ENCODE measurements at regions of chr16 and their contacts with region 1.

Region 1: GRCh38 chr16:29848420-29849297 is 14.4 kb downstream of the CDIPT start:
- DNase-seq: peak; percentile 66 to 84 (median 74)
- H3K4me3 ChIP-seq: no peak overlapping the region
- H3K4me3 Mint-ChIP-seq: no peak overlapping the region
- H3K27ac ChIP-seq: no peak overlapping the region
- H3K27ac Mint-ChIP-seq: peak overlapping the region; percentile 45 to 68 (median 56)
- H3K4me1 ChIP-seq: no peaks in the 10 kb centered on the region
- H3K4me1 Mint-ChIP-seq: peaks cover 3 to 8% (median 5%) of the 10 kb centered on the region in 3 donors
- H3K27me3 ChIP-seq: no peaks in the 10 kb centered on the region
- H3K27me3 Mint-ChIP-seq: no peaks in the 10 kb centered on the region

Region 2: GRCh38 chr16:29694384-29695195 is 154.1 kb before region 1 on chr16:
- CTCF ChIA-PET with region 1: interaction called, 83 read pairs
- POLR2A ChIA-PET with region 1: no interaction called
- DNase-seq: no peak
- H3K4me3 ChIP-seq: no peak overlapping the region
- H3K4me3 Mint-ChIP-seq: no peak overlapping the region
- H3K27ac ChIP-seq: no peak overlapping the region
- H3K27ac Mint-ChIP-seq: no peak overlapping the region
- H3K4me1 ChIP-seq: peaks cover 5% of the 10 kb centered on the region
- H3K4me1 Mint-ChIP-seq: peaks cover 6 to 11% (median 10%) of the 10 kb centered on the region in 3 donors
- H3K27me3 ChIP-seq: no peaks in the 10 kb centered on the region
- H3K27me3 Mint-ChIP-seq: peaks cover 0 to 2% of the 10 kb centered on the region in 2 donors

Region 3: DNA sequence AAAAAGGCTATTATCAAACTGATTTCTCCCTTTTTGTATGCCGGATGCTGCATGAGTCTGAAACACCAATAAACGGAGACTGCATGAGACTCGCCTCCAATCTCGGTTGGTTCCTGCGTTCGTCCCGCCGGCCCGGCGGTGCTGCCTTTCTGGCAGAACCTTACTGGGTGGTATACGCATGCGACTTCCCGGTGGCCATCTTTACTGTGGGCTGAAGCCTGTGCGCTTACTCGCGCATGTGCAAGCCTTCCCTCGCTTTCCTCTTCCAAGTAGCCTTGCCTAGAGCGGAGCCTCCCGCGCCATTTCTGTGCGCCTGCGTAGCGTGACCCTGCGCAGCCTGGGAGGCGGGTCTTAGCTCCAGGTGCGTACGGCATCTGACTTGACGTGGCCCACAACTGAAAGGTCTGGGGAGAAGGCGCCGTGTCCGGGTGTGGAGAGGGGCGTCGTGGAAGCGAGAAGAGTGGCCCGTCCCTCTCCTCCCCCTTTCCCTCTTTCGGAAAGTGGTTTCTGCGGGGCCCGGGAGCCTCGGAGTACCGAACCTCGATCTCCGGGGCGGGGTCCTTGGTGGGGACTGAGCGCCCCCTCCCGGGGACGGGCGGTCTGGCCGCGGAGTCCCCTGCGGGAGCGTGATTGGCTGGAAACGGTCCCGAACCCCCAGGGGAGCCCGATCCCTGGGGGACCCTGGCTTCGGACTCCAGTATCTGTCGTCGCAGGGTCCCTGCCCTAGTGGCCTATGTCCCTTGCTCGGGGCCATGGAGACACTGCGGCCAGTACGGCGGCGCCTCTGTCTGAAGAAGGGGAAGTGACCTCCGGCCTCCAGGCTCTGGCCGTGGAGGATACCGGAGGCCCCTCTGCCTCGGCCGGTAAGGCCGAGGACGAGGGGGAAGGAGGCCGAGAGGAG is 32.6 kb before region 1 on chr16 and contains the start of gene PAGR1:
- CTCF ChIA-PET with region 1: interaction called, 88 read pairs
- POLR2A ChIA-PET with region 1: interaction called, 6 read pairs
- DNase-seq: peak; percentile 95 to 99 (median 99)
- H3K4me3 ChIP-seq: peak within 1 kb of the TSS; percentile 94
- H3K4me3 Mint-ChIP-seq: peak within 1 kb of the TSS; percentile 89 to 99 (median 93)
- H3K27ac ChIP-seq: peak within 1 kb of the TSS; percentile 89
- H3K27ac Mint-ChIP-seq: peak within 1 kb of the TSS; percentile 93 to 99 (median 98)
- H3K4me1 ChIP-seq: peaks cover 54% of the 10 kb centered on the region
- H3K4me1 Mint-ChIP-seq: peaks cover 53 to 79% (median 62%) of the 10 kb centered on the region in 3 donors
- H3K27me3 ChIP-seq: no peaks in the 10 kb centered on the region
- H3K27me3 Mint-ChIP-seq: peaks cover 0 to 4% of the 10 kb centered on the region in 2 donors
- total RNA-seq, gene PAGR1: 41.9 to 44.3 TPM

Region 4: DNA sequence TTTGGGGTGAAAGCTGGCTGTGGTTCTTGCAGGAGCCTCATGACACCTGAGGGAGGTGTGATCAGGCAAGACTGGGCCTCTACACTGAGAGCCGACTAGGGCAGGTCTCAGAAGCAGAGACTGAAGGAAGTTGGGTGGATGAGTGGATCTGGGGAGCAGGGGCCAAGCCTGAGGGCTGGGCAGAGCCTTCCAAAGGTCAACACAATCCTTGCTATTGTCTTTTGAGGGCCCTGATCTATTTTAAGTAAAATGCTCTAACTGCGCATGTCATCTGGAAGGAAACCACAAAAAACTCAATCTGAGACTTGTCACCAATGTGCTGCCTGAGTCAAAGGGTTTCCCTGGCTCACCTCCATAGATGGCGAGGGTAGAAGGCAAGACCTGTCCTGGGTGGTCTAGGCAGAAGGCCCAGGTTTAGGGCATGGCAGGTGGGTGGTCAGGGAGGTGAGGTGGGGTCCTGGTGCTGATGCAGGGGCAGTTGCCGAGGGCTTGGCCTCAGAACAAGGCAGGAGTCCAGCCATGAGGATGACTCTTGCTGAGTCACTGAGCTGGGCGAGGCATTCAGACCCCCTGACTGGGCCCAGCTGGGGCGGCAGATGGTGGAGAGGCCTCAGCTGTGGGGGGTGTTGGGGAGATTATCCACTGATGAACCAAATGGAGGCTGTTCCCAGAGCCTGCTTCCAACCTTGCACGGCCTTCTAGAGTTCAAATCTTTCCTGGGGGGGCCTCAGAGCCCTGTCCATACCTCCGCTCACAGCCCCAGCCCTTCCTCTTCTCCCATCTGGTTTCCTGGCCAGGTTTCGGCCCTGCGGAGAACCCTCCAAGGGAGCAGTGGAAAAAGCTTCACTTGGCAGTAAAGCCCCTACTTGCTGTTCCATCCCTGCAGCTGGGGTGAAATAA is 23.3 kb before region 1 on chr16:
- CTCF ChIA-PET with region 1: interaction called, 88 read pairs
- POLR2A ChIA-PET with region 1: interaction called, 3 read pairs
- DNase-seq: peak in 1 of 5 donors; percentile 39
- H3K4me3 ChIP-seq: peak overlapping the region; percentile 50
- H3K4me3 Mint-ChIP-seq: peak overlapping the region; percentile 46 to 79 (median 71)
- H3K27ac ChIP-seq: no peak overlapping the region
- H3K27ac Mint-ChIP-seq: peak overlapping the region; percentile 61 to 93 (median 88)
- H3K4me1 ChIP-seq: peaks cover 94% of the 10 kb centered on the region
- H3K4me1 Mint-ChIP-seq: peaks cover 51 to 78% (median 55%) of the 10 kb centered on the region in 3 donors
- H3K27me3 ChIP-seq: no peaks in the 10 kb centered on the region
- H3K27me3 Mint-ChIP-seq: no peaks in the 10 kb centered on the region

Region 5: GRCh38 chr16:29831490-29831889 is 17.2 kb before region 1 on chr16:
- CTCF ChIA-PET with region 1: interaction called, 22 read pairs
- POLR2A ChIA-PET with region 1: interaction called, 8 read pairs
- DNase-seq: no peak
- H3K4me3 ChIP-seq: no peak overlapping the region
- H3K4me3 Mint-ChIP-seq: no peak overlapping the region
- H3K27ac ChIP-seq: no peak overlapping the region
- H3K27ac Mint-ChIP-seq: peak overlapping the region in 2 of 8 donors; percentile 8 to 69
- H3K4me1 ChIP-seq: peaks cover 43% of the 10 kb centered on the region
- H3K4me1 Mint-ChIP-seq: peaks cover 23 to 39% (median 23%) of the 10 kb centered on the region in 3 donors
- H3K27me3 ChIP-seq: no peaks in the 10 kb centered on the region
- H3K27me3 Mint-ChIP-seq: no peaks in the 10 kb centered on the region

Region 6: GRCh38 chr16:29871822-29872546 is 23.3 kb after region 1 on chr16:
- CTCF ChIA-PET with region 1: no interaction called
- POLR2A ChIA-PET with region 1: no interaction called
- DNase-seq: no peak
- H3K4me3 ChIP-seq: no peak overlapping the region
- H3K4me3 Mint-ChIP-seq: no peak overlapping the region
- H3K27ac ChIP-seq: no peak overlapping the region
- H3K27ac Mint-ChIP-seq: no peak overlapping the region
- H3K4me1 ChIP-seq: peaks cover 4% of the 10 kb centered on the region
- H3K4me1 Mint-ChIP-seq: peaks cover 7 to 15% (median 10%) of the 10 kb centered on the region in 3 donors
- H3K27me3 ChIP-seq: peaks cover under 1% of the 10 kb centered on the region
- H3K27me3 Mint-ChIP-seq: peaks cover 15% of the 10 kb centered on the region in 2 donors

Region 7: DNA sequence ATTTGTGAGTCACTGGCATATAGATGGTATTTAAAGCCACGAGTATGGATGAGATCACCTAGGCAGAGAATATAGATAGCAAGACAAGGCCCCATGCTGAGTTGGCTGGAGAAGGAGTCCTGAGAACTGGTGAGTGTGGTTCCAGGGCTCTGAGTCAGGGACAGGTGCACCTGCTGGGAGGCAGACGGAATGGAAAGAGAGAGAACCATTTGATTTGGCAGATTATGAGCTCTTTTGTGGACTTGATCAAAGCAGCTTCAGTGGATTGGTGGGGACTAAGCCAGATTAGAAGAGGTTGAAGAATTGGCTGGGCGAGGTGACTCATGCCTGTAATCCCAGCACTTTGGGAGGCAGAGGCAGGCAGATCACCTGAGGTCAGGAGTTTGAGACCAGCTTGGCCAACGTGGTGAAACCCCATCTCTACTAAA is 170.1 kb after region 1 on chr16:
- CTCF ChIA-PET with region 1: interaction called, 11 read pairs
- POLR2A ChIA-PET with region 1: no interaction called
- DNase-seq: no peak
- H3K4me3 ChIP-seq: no peak overlapping the region
- H3K4me3 Mint-ChIP-seq: peak overlapping the region in 1 of 7 donors; percentile 26
- H3K27ac ChIP-seq: no peak overlapping the region
- H3K27ac Mint-ChIP-seq: peak overlapping the region in 2 of 8 donors; percentile 45 to 53
- H3K4me1 ChIP-seq: peaks cover 11% of the 10 kb centered on the region
- H3K4me1 Mint-ChIP-seq: peaks cover 5 to 12% (median 7%) of the 10 kb centered on the region in 3 donors
- H3K27me3 ChIP-seq: no peaks in the 10 kb centered on the region
- H3K27me3 Mint-ChIP-seq: peaks cover 5 to 6% of the 10 kb centered on the region in 2 donors